Posterior vena cava (tissue), 2 donors: ENCODE measurements at regions of chr3 and their contacts with region 1.

Region 1: GRCh38 chr3:162217647-162218046 is 721.0 kb downstream of the OTOL1 start:
- DNase-seq: no peak

Region 2: DNA sequence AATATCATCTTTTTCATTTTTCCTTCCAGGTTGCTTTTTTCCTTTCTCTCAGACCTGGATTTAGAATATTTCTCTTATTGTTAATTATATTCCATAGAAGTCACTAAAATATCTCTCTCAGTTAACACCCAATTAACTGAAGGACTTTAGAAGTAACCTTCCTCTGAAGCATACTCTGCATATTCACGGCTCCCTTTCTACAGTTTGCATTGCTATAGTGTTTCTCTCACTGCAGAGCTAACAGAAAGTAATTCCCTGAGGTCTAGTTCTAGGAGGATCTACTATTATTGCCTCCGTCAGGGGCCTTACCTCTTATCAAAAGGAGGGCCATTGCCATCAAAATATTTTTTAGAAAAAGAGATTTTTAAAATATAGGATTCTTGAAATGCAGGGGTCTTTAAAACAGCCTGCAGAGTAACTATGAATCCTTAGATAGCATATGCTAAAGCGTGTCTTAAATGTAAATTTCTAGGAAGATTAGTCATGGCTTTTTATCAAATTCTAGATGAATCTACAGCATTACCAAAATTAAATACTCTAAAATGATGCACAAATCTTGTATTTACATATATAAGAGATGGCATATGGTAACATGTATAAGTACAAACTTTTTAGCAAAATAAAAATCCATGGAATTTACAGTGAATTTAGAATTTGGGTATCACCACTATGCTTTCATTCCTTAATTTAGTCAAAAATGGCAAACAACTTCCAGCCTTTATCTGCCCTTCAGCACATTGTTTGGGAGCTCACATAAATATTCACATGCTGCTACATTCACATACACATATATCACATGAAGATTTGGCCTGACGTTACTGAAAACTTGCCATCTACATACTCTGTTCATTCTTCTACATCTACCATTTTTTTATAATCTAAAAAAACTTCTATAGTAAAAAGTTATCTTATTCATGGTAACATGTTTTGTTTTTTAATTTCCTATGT is 24.2 kb before region 1 on chr3:
- intact Hi-C with region 1: loop called in 1 of 2 experiments (anchors 1 kb)
- DNase-seq: no peak

Region 3: DNA sequence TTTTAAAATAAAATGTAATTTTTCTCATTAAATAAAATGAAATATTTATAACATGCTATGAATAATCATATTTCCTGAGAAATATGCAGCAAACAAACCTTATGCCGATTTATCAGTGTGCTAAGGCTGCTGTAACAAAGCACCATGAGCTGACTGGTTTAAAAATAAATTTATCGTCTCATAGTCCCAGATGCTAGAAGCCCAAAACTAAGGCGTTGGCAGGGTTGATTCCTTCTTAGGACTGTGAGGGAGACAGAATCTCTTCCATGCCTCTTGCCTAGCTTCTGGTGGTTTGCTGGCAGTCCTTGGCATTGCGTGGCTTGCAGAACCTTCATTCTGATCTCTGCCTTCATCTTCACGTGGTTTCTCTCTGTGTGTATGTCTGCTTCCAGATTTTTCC is 19.3 kb after region 1 on chr3:
- intact Hi-C with region 1: no loop called
- DNase-seq: no peak